RWPE1 (cell line): ENCODE measurements at regions of chr2 and their contacts with region 1.

Region 1: DNA sequence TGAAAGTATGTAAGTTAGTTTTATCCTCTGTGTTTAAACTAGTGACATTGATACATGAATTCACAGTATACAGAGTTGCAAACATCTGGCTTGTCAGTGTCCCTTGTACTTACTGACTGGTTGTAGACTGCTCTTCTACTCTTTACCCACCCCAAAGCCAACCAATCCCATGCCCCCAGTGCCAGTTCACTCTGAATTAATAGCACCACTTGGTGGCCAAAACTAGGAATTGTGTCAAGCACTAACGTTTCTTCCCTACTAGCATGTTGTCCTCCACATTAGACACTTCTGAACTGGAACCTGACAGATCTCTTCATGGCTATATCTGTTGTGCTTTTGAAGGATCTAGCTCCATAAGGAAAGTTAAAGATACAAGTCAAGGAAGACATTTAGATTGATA is 27.2 kb upstream of the OTX1 start:
- DNase-seq: no peak
- H3K27ac ChIP-seq: no peak overlapping the region
- CTCF ChIP-seq: peak; percentile 34

Region 2: GRCh38 chr2:63553049-63553448 is 529.6 kb after region 1 on chr2:
- CTCF ChIA-PET with region 1: no interaction called
- POLR2A ChIA-PET with region 1: interaction called, 13 read pairs
- DNase-seq: peak; percentile 5
- H3K27ac ChIP-seq: no peak overlapping the region
- CTCF ChIP-seq: no peak